Endothelial cell of umbilical vein (primary cell): ENCODE measurements at regions of chr10 and their contacts with region 1.

Region 1: GRCh38 chr10:61835069-61835945 is 66.2 kb upstream of the ARID5B start:
- DNase-seq: peak; percentile 90
- H3K4me3 ChIP-seq: no peak overlapping the region
- H3K27ac ChIP-seq: peak overlapping the region; percentile 81
- H3K4me1 ChIP-seq: peaks cover 44% of the 10 kb centered on the region
- H3K27me3 ChIP-seq: no peaks in the 10 kb centered on the region
- CTCF ChIP-seq: peak; percentile 45
- POLR2A ChIP-seq: no peak

Region 2: GRCh38 chr10:60964257-60965235 is 870.8 kb before region 1 on chr10:
- CTCF ChIA-PET with region 1: no interaction called
- POLR2A ChIA-PET with region 1: no interaction called
- dilution Hi-C with region 1: no loop called
- intact Hi-C with region 1: loop called (anchors 5 kb)
- DNase-seq: peak; percentile 91
- H3K4me3 ChIP-seq: peak overlapping the region in 1 of 3 experiments; percentile 34
- H3K27ac ChIP-seq: peak overlapping the region; percentile 94
- H3K4me1 ChIP-seq: peaks cover 27% of the 10 kb centered on the region
- H3K27me3 ChIP-seq: no peaks in the 10 kb centered on the region
- CTCF ChIP-seq: peak; percentile 67 to 74
- POLR2A ChIP-seq: no peak

Region 3: DNA sequence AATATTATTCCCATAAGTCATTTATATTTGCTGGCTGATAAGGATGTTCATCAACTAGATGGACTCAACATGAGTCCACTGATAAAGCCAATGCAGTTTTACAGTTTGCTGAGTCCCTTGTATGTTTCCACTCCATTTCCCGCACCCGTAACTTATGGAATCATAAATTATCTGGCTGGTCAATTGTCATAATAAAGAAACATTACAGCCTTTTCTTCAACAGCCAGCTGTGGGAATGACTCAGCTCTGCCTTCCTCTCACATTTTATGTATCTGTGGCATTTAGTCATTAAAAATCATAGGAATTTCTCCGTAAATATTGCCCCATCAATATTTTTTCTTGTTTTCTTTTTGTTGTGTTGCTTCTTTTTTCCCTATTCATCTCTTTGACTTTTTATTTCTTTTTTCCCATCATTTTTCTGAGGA is 359.8 kb before region 1 on chr10:
- CTCF ChIA-PET with region 1: no interaction called
- POLR2A ChIA-PET with region 1: no interaction called
- dilution Hi-C with region 1: no loop called
- intact Hi-C with region 1: loop called (anchors 5 kb)
- DNase-seq: peak; percentile 94
- H3K4me3 ChIP-seq: no peak overlapping the region
- H3K27ac ChIP-seq: peak overlapping the region; percentile 55
- H3K4me1 ChIP-seq: peaks cover 26% of the 10 kb centered on the region
- H3K27me3 ChIP-seq: no peaks in the 10 kb centered on the region
- CTCF ChIP-seq: no peak
- POLR2A ChIP-seq: no peak

Region 4: GRCh38 chr10:61662794-61663259 is 172.5 kb before region 1 on chr10 and contains the start of gene CABCOCO1:
- CTCF ChIA-PET with region 1: no interaction called
- POLR2A ChIA-PET with region 1: no interaction called
- dilution Hi-C with region 1: no loop called
- intact Hi-C with region 1: no loop called
- DNase-seq: peak; percentile 68
- H3K4me3 ChIP-seq: peak within 1 kb of the TSS; percentile 54 to 90 (median 58)
- H3K27ac ChIP-seq: no peak within 1 kb of the TSS
- H3K4me1 ChIP-seq: no peaks in the 10 kb centered on the region
- H3K27me3 ChIP-seq: no peaks in the 10 kb centered on the region
- CTCF ChIP-seq: no peak
- POLR2A ChIP-seq: no peak
- total RNA-seq, gene CABCOCO1: 0.51 and 1.3 TPM in 2 replicates

Region 5: GRCh38 chr10:61760943-61761824 is 74.1 kb before region 1 on chr10:
- CTCF ChIA-PET with region 1: interaction called, 10 read pairs
- POLR2A ChIA-PET with region 1: no interaction called
- dilution Hi-C with region 1: no loop called
- intact Hi-C with region 1: no loop called
- DNase-seq: peak; percentile 59
- H3K4me3 ChIP-seq: no peak overlapping the region
- H3K27ac ChIP-seq: peak overlapping the region; percentile 22
- H3K4me1 ChIP-seq: peaks cover 14% of the 10 kb centered on the region
- H3K27me3 ChIP-seq: no peaks in the 10 kb centered on the region
- CTCF ChIP-seq: no peak
- POLR2A ChIP-seq: no peak

Region 6: GRCh38 chr10:61896854-61897661 is 61.8 kb after region 1 on chr10:
- CTCF ChIA-PET with region 1: interaction called, 38 read pairs
- POLR2A ChIA-PET with region 1: interaction called, 13 read pairs
- dilution Hi-C with region 1: no loop called
- intact Hi-C with region 1: loop called (anchors 1 kb)
- DNase-seq: peak; percentile 59
- H3K4me3 ChIP-seq: peak overlapping the region in 2 of 3 experiments; percentile 4 to 6
- H3K27ac ChIP-seq: no peak overlapping the region
- H3K4me1 ChIP-seq: peaks cover 24% of the 10 kb centered on the region
- H3K27me3 ChIP-seq: no peaks in the 10 kb centered on the region
- CTCF ChIP-seq: peak; percentile 69 to 73
- POLR2A ChIP-seq: no peak

Region 7: GRCh38 chr10:62050893-62051433 is 215.7 kb after region 1 on chr10:
- CTCF ChIA-PET with region 1: no interaction called
- POLR2A ChIA-PET with region 1: no interaction called
- dilution Hi-C with region 1: no loop called
- intact Hi-C with region 1: loop called (anchors 5 kb)
- DNase-seq: peak; percentile 88
- H3K4me3 ChIP-seq: peak overlapping the region in 2 of 3 experiments; percentile 36 to 60
- H3K27ac ChIP-seq: peak overlapping the region; percentile 63
- H3K4me1 ChIP-seq: peaks cover 46% of the 10 kb centered on the region
- H3K27me3 ChIP-seq: no peaks in the 10 kb centered on the region
- CTCF ChIP-seq: no peak
- POLR2A ChIP-seq: no peak